Right ventricle myocardium inferior (tissue), 1 donor: ENCODE measurements at regions of chr7 and their contacts with region 1.

Region 1: GRCh38 chr7:117119192-117119924 is 166.1 kb downstream of the ST7 start:
- DNase-seq: peak; percentile 79
- ATAC-seq: no peak

Region 2: GRCh38 chr7:116984917-116985316 is 134.4 kb before region 1 on chr7:
- intact Hi-C with region 1: loop called (anchors 1 kb)
- DNase-seq: no peak
- ATAC-seq: no peak

Region 3: DNA sequence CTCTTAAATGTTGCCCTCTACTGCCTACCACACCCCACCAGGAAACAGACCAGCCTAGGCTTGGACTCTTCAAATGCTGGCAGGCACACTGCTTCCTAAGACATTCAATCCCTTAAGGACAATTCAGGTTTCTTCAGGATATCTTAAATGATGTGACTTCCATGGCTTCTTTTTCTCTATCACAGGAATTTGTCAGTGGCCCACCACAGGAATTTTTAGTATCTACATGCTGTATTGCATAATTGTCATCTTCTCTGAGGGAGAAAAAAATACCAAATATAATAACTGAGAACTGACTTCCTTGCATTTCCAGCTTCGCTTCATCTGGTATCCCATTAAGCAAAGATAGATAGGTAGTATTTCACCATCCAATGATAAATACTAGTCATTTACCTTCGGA is 74.2 kb after region 1 on chr7:
- intact Hi-C with region 1: no loop called
- DNase-seq: no peak
- ATAC-seq: no peak